HEK293T (cell line): ENCODE measurements at regions of chrX and their contacts with region 1.

Region 1: GRCh38 chrX:103464774-103465117 is 54.5 kb downstream of the RAB40A start:
- DNase-seq: peak; percentile 78

Region 2: GRCh38 chrX:103214870-103215424 is 249.8 kb before region 1 on chrX and contains the start of gene BEX4:
- CTCF ChIA-PET with region 1: interaction called, 13 read pairs
- POLR2A ChIA-PET with region 1: interaction called, 3 read pairs
- DNase-seq: peak; percentile 88

Region 3: DNA sequence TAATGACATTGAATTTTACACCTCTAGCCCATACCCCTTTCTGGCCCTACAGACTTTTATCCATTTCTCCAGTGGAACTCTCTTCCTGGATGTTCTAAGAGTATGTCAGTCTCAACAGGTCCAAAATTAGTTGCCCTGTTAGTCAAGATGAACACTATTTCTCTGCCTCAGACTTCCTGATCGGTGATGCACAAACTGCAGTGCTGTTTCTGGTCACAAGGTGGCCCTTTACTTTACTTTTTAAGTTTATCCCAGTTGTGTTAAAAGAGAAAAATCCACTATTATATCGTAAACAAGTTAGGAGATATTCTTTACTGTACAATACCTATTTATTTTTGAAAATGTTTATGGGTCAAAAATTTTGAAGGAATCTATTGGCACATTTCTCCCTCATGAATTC is 121.6 kb before region 1 on chrX:
- CTCF ChIA-PET with region 1: interaction called, 16 read pairs
- POLR2A ChIA-PET with region 1: no interaction called
- DNase-seq: peak; percentile 59

Region 4: DNA sequence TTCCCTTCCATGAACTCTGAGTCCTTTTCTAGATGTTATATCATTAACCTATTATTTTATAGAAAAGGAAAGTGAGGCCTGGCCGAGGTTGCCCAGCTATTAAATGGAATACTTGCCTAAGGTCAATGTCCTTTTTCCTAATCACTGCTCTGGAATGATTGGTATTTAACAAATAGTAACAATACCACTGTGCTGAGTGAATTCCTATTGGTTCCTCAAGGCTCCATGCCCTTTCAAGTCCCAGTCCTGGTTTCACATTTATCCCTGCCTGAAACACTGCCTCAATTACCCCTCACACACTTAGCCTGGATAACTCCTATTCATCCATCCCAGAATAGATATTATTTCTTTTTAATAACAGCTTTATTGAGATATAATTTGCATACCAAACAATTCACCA is 102.2 kb before region 1 on chrX:
- CTCF ChIA-PET with region 1: interaction called, 11 read pairs
- POLR2A ChIA-PET with region 1: no interaction called
- DNase-seq: no peak

Region 5: DNA sequence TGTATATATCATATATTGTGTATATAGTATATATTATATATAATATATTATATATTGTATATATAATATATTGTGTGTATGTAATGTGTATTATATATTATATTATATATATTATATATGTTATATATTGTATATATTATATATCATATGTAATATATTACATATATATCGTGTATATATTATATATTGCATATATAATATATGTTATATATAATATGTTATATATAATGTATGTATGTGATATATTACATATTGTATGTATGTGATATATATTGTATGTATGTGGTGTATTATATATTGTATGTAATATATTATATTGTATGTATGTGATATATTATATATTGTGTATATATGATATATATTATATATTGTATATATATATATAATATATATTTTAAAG is 24.0 kb after region 1 on chrX:
- CTCF ChIA-PET with region 1: interaction called, 11 read pairs
- POLR2A ChIA-PET with region 1: no interaction called
- DNase-seq: no peak